ENCODE measurements at regions of chr7 and their contacts with region 1.

Region 1: DNA sequence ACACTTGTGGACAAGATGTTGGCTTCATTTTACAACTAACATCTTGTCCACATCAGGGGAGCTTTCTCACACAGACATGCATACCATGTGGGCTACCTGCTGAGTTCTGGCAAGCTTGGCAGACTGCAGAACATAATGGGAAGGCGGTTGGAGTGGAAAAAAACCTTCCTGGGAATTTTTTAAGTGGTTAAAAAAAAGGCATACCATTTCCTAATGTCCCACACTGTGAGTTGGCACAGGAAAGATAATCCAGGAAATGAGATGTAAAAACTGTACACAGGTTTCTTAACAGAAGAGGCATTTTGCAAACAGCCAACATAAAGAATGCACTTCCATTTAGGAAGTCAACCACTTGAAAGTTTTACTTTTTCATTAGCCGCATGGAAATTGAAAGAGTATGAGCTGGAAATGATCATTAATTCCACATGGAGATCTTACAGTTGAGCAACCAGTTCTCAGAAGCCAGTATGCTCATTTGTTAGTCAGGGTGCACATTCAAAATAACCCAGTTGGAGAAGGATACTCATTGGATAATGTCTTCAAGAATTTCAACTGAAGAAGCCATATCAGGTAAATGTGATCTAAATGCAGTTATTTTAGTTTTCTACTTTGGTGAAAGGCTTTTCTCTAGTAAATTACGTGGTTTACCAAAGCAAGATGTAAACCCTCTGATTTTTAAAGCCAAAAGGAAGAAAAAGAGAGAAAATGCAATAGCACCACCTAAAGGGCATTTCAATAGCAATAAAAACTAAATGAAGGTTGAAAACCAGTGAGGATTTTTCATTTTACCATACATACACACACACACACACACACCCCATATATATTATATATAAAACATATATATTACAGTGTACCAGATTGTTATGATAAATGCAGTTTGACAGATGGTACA is 194.0 kb downstream of the TAX1BP1 start:
- DNase-seq: no peak
- H3K4me3 Mint-ChIP-seq: no peak overlapping the region
- H3K27ac Mint-ChIP-seq: no peak overlapping the region
- H3K4me1 Mint-ChIP-seq: no peaks in the 10 kb centered on the region
- H3K27me3 Mint-ChIP-seq: peaks cover 12% of the 10 kb centered on the region

Region 2: DNA sequence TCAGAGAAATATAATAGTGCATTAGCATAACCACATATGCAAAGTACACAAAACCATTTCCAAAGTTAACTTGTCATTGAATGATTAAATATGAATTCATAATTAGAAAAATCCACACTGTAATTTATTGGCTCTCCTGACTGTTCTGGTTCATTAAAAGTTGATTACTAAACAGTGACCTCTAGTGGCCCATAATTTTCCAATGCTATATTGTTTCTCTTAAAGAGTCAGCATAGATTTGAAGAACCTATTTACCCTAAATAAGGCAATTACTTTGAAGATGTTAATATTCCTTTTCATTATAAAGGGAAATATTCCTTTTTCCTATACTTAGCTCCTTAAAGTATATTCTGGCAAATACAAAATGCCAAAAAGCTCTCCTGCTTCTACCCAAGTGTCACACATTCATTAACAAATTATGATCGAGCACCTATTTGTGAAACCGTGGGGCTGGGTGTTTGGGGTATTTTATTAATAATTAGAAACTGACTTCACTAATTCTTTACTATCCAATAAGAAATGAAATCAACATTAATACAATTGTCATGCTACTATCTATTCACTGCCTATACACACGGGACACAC is 357.5 kb before region 1 on chr7:
- intact Hi-C with region 1: loop called (anchors 10 kb)
- DNase-seq: no peak
- H3K4me3 Mint-ChIP-seq: no peak overlapping the region
- H3K27ac Mint-ChIP-seq: no peak overlapping the region
- H3K4me1 Mint-ChIP-seq: no peaks in the 10 kb centered on the region
- H3K27me3 Mint-ChIP-seq: peaks cover 2% of the 10 kb centered on the region

Measured in activated CD4-positive, alpha-beta T cell treated with anti-CD3 and anti-CD28 coated beads, Interleukin-2, amount 10 ng/mL, durations not matched to agents 24 days and 14 days (primary cell).